SK-N-SH (cell line): ENCODE measurements at regions of chr16 and their contacts with region 1.

Region 1: DNA sequence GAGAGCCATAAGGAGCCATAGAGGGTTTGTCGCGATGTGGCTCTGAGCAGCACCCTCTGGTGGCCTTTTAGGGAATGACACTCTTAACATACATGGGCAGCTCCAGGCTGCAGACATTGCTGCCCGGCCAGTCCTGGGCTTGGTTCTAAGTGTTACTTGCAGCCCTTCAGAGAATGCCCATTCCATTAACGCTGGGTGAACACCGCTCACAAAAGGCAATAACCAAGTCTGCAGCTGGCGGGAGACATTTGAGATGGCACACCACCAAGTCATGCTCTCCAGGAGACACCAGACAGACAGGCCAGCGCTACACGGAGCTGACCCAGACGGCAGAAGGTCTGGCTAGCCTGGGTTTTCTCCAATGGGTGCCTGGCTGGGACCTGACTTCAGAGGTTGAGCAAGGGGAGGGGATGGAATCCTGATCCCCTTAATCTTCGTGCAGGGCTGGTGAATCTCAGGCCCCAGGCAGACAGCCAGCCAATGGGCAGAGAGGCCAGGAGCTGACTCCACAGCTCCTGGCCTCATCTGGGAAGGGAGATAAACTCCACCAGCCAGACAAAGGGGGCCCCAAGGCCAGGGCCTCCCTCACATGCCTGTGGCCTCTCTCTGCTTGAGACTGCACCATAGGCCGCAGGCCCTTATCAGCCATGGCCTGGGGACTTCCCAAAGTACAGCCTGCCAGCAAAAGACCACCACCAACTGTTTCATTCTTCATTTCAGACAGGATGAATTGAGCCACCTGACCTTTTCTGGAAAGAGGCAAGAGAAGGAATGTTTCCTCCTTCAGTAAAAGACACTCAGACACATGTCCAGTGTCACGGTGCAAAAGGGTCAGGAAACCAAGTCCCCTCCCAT is 58.8 kb downstream of the ZDHHC7 start:
- DNase-seq: peak; percentile 85
- H3K4me3 ChIP-seq: peak overlapping the region in 1 of 2 experiments; percentile 32; a peak in 1 of 4 replicates
- H3K27ac ChIP-seq: peak overlapping the region; percentile 22 to 84; a peak in 3 of 4 replicates
- H3K4me1 ChIP-seq: peaks cover 4 to 14% of the 10 kb centered on the region in 2 experiments; a peak in 2 of 4 replicates
- H3K27me3 ChIP-seq: no peaks in the 10 kb centered on the region
- CTCF ChIP-seq: peak; percentile 88
- EP300 ChIP-seq: peak in 1 of 2 experiments; percentile 71; a peak in 2 of 4 replicates
- RAD21 ChIP-seq: peak; percentile 82

Region 2: DNA sequence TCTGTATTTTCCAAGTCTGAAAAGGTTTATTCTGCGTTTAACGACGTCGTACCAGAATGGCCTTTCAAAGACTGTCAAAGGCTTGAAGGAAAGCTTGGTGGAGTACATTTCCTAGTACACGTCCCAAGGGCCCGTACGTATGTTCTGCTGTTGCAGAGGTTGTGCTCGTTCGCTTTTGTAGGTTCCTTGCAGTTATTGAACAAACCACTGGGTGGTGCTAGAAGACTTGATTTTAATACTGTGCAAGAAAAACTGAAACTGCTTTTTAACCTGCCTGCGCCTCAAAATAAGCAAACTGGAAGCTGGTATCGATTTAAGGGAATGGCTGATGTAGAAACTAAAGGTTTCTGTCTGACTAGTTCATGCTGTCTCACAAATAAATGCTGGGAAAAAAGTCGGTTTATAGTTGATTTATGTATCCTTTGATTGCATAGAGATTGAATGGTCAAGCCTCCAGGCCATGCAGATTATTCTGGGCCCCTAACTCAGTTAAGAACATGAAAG is 198.2 kb before region 1 on chr16:
- CTCF ChIA-PET with region 1: interaction called, 179 read pairs
- POLR2A ChIA-PET with region 1: interaction called, 3 read pairs
- DNase-seq: peak; percentile 62
- H3K4me3 ChIP-seq: peak overlapping the region in 1 of 2 experiments; percentile 4; a peak in 1 of 4 replicates
- H3K27ac ChIP-seq: no peak overlapping the region
- H3K4me1 ChIP-seq: no peaks in the 10 kb centered on the region; a peak in 1 of 4 replicates
- H3K27me3 ChIP-seq: no peaks in the 10 kb centered on the region
- CTCF ChIP-seq: peak; percentile 85
- EP300 ChIP-seq: no peak
- RAD21 ChIP-seq: peak; percentile 93

Region 3: DNA sequence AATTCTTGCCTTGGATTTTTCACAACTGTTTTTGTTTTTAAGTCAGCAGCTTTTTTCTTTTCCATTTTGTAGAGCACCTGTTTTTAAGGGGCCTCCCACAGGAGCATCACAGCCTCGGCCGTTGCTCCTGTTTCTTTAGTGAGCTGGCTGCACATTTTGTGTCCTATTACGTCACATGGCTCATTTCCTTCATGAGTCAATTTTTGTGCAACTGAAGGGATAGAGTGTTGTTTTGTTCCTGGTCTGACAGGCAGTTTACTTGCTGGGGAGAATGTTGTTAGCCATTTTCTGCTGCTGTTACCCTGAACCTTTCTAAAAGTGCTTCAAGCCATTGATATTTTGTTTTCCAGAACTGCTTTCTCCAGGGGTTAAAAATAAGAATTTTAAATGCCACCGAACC is 177.8 kb before region 1 on chr16:
- CTCF ChIA-PET with region 1: interaction called, 20 read pairs
- POLR2A ChIA-PET with region 1: no interaction called
- DNase-seq: no peak
- H3K4me3 ChIP-seq: no peak overlapping the region
- H3K27ac ChIP-seq: no peak overlapping the region
- H3K4me1 ChIP-seq: no peaks in the 10 kb centered on the region
- H3K27me3 ChIP-seq: no peaks in the 10 kb centered on the region
- CTCF ChIP-seq: no peak
- EP300 ChIP-seq: no peak
- RAD21 ChIP-seq: no peak

Region 4: GRCh38 chr16:84914273-84914672 is 38.3 kb before region 1 on chr16:
- CTCF ChIA-PET with region 1: interaction called, 32 read pairs
- POLR2A ChIA-PET with region 1: no interaction called
- DNase-seq: no peak
- H3K4me3 ChIP-seq: no peak overlapping the region
- H3K27ac ChIP-seq: no peak overlapping the region
- H3K4me1 ChIP-seq: peaks cover 0 to 3% of the 10 kb centered on the region in 2 experiments; a peak in 1 of 4 replicates
- H3K27me3 ChIP-seq: no peaks in the 10 kb centered on the region
- CTCF ChIP-seq: no peak
- EP300 ChIP-seq: no peak
- RAD21 ChIP-seq: no peak

Region 5: DNA sequence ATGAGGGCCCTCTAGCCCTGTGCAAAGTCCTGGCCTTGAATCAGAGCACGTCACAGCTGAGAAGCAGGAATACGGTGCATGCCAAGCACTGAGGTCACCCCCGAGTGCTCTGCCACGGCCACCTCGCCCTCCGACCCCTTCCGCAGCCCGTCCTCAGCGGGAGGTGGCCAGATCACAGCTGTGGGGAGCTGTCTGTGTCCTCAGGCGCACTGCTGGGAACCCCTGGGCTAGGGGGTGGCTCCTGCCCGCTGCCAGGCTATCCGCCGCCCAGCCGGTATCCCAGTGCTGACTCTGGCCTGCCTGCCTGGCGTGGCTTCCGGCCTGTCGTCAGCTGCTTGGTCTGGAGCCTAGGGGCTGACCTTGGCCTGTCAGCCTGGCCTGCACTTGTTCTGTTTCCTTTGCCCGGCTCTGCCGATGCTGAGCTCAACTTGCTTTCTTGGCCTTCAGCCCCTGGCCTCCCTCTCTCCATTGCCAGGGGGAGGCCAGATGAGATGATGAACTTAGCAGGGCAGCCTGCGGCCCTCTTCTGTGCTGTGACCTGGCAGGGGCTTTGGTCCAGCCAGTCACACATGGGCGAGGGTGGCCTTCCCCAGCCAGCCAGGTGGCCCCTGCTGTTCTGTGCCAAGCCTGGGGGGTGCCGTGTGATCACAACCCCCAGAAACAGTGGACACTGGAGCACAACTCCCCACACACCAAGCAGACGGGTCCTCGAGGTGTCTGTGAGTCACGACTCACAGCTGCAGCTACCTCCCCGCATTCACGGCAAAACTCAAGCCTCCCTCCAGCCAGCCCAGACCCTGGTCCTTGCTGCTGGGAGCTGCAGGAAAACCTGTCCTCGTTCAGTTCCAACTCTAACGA is 18.6 kb before region 1 on chr16:
- CTCF ChIA-PET with region 1: interaction called, 45 read pairs
- POLR2A ChIA-PET with region 1: no interaction called
- DNase-seq: peak; percentile 48
- H3K4me3 ChIP-seq: no peak overlapping the region
- H3K27ac ChIP-seq: no peak overlapping the region
- H3K4me1 ChIP-seq: peaks cover 0 to 11% of the 10 kb centered on the region in 2 experiments; a peak in 1 of 4 replicates
- H3K27me3 ChIP-seq: no peaks in the 10 kb centered on the region
- CTCF ChIP-seq: no peak
- EP300 ChIP-seq: no peak
- RAD21 ChIP-seq: no peak